GM12878 (cell line): ENCODE measurements at regions of chr19 and their contacts with region 1.

Region 1: DNA sequence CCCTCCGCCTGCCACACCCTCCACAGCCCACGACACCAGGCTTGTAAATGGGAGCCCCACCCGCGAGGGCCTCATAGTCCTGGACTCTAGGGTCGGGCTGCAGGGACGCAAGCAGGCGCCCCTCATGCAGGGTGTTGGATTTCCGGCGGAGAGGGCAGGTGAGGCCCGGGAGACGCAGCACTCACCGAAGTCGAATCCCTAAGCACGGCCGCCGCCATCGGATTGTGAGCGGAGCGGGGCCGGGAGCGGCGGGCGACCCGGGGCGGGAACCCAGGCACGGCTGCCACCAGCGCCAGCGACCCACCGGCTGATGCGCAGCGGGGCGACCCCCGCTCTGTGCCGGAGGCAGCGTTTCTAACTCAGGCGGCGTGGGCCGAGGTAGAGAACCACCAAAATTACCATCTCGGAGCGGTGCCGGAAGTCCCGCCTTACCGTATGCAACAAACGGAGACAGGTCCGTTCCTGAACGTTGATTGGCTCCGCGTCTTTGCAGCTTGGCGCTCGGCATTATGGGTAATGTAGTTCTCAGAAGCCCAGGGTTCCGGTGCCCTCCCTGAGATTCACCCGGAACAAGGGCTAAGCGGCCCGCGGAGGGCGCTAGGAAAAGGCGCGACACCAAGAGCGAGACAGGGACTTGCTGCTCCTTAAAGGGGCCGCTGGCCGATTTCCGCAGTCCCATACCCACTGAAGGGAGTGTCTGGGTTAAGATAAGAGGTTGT is at the start of gene ZNF416:
- DNase-seq: peak; percentile 97
- ATAC-seq: peak; percentile 98
- H3K4me3 ChIP-seq: peak within 1 kb of the TSS; percentile 90
- H3K27ac ChIP-seq: peak within 1 kb of the TSS; percentile 65
- H3K4me1 ChIP-seq: peaks cover 8% of the 10 kb centered on the region; the same call in 1 of the 2 replicates
- H3K27me3 ChIP-seq: no peaks in the 10 kb centered on the region
- CTCF ChIP-seq: peak in 2 of 3 experiments; percentile 20 to 38; a peak in 2 of 6 replicates
- EP300 ChIP-seq: no peak
- POLR2A ChIP-seq: peak; percentile 76
- RAD21 ChIP-seq: peak; percentile 15; the same call in 1 of the 2 replicates
- polyA plus RNA-seq, gene ZNF416: 1.2 to 1.6 TPM

Region 2: DNA sequence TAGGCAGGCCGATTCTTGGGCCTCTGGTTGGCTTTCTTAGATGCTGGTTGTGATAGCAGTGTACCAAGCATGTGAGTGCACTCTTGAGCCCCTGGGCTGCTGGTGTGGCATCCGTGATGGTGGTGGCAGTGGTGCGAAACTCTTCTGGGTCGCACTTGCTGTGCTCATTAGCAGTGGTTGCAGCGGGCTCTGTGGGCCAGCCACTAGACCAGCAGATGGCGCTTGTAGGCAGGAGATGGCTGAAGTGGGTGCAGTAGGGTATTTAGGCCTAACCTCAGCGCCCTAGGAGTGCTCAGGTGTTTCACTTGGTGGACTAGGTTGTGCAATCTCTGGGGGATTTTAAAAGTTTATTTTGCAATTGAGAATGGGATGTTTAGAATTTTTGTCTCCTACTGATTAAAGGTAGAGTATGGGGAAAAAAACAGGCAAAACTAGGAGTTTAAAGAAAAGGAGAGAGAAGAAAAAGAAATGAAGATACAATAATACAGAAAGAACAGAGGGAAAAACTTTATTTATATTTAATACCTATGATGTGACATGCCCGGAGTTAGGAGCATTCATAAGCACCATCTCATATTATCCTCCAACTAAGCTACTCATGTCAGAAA is 172.0 kb before region 1 on chr19:
- CTCF ChIA-PET with region 1: no interaction called
- POLR2A ChIA-PET with region 1: no interaction called
- RAD21 ChIA-PET with region 1: interaction called, 3 read pairs
- SMC1A ChIA-PET with region 1: no interaction called
- in situ Hi-C with region 1: no loop called
- intact Hi-C with region 1: loop called (anchors 2 kb)
- DNase-seq: peak; percentile 17
- ATAC-seq: peak; percentile 85
- H3K4me3 ChIP-seq: no peak overlapping the region
- H3K27ac ChIP-seq: no peak overlapping the region
- H3K4me1 ChIP-seq: no peaks in the 10 kb centered on the region
- H3K27me3 ChIP-seq: no peaks in the 10 kb centered on the region
- CTCF ChIP-seq: peak; percentile 70 to 89 (median 88)
- EP300 ChIP-seq: no peak
- POLR2A ChIP-seq: no peak
- RAD21 ChIP-seq: peak; percentile 86

Region 3: GRCh38 chr19:57613941-57614743 is 35.5 kb after region 1 on chr19 and contains the start of gene ZNF134:
- CTCF ChIA-PET with region 1: no interaction called
- POLR2A ChIA-PET with region 1: no interaction called
- RAD21 ChIA-PET with region 1: no interaction called
- SMC1A ChIA-PET with region 1: no interaction called
- in situ Hi-C with region 1: no loop called
- intact Hi-C with region 1: loop called (anchors 1 kb)
- DNase-seq: peak; percentile 52
- ATAC-seq: peak; percentile 100
- H3K4me3 ChIP-seq: peak within 1 kb of the TSS; percentile 88
- H3K27ac ChIP-seq: peak within 1 kb of the TSS; percentile 67
- H3K4me1 ChIP-seq: no peaks in the 10 kb centered on the region
- H3K27me3 ChIP-seq: no peaks in the 10 kb centered on the region
- CTCF ChIP-seq: 0 out of 6 replicates have a peak, but pooled peaks of 2 of the 3 experiments have one; percentile 4 to 5
- EP300 ChIP-seq: no peak
- POLR2A ChIP-seq: peak; percentile 87
- RAD21 ChIP-seq: no peak
- polyA plus RNA-seq, gene ZNF134: 1.6 to 2.6 TPM

Region 4: GRCh38 chr19:57632987-57633831 is 54.6 kb after region 1 on chr19 and contains the start of gene ZNF211:
- CTCF ChIA-PET with region 1: no interaction called
- POLR2A ChIA-PET with region 1: no interaction called
- RAD21 ChIA-PET with region 1: no interaction called
- SMC1A ChIA-PET with region 1: no interaction called
- in situ Hi-C with region 1: no loop called
- intact Hi-C with region 1: loop called (anchors 2 kb)
- DNase-seq: peak; percentile 82
- ATAC-seq: peak; percentile 100
- H3K4me3 ChIP-seq: peak within 1 kb of the TSS; percentile 92
- H3K27ac ChIP-seq: peak within 1 kb of the TSS; percentile 30
- H3K4me1 ChIP-seq: no peaks in the 10 kb centered on the region; the same call in 1 of the 2 replicates
- H3K27me3 ChIP-seq: no peaks in the 10 kb centered on the region
- CTCF ChIP-seq: 0 out of 6 replicates have a peak, but pooled peaks of 1 of the 3 experiments have one; percentile 6
- EP300 ChIP-seq: 0 out of 4 replicates have a peak, but pooled peaks of 1 of the 2 experiments have one; percentile 23
- POLR2A ChIP-seq: peak; percentile 82
- RAD21 ChIP-seq: no peak
- polyA plus RNA-seq, gene ZNF211: 2.1 to 3.6 TPM